A673 (cell line): ENCODE measurements at regions of chr4 and their contacts with region 1.

Region 1: DNA sequence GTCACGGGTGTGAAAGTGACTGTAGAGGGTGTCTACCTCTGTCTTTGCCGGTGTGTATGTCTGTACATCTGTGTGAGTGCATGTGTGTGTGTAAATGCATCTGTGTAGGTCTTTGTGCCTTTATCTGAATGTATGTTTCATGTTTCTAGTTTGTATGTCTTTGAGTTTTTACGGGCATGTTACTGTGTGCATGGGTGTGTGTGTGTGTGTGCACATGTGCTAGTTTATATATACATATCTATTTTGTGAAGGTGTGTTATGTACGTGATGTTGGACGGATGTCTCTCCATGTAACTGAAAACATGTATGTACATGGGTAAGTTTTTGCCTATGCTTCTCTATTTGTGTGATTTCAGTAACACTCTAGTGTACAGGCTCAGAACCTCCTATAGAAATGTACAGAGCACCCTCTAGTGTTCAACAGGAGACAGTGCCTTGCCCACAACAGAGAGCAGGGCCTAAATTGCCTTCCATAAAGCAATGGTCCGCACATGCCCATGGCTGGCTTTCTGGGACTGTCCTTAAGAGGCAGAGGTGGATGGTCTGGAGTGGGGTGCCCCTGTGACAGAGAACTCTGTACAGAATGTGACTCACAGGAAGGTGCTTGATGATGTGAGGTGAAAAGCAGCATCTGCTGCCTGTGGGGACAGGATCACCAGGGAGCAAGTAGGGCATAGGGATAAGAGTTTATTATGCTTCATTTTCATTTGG is 343.5 kb downstream of the RAPGEF2 start:
- DNase-seq: peak; percentile 89
- H3K4me3 ChIP-seq: no peak overlapping the region
- H3K27ac ChIP-seq: no peak overlapping the region
- H3K4me1 ChIP-seq: no peaks in the 10 kb centered on the region
- H3K27me3 ChIP-seq: no peaks in the 10 kb centered on the region
- CTCF ChIP-seq: peak; percentile 99

Region 2: GRCh38 chr4:158259955-158260575 is 1186.4 kb before region 1 on chr4:
- CTCF ChIA-PET with region 1: no interaction called
- POLR2A ChIA-PET with region 1: no interaction called
- intact Hi-C with region 1: loop called (anchors 5 kb)
- DNase-seq: peak; percentile 71
- H3K4me3 ChIP-seq: no peak overlapping the region
- H3K27ac ChIP-seq: no peak overlapping the region
- H3K4me1 ChIP-seq: no peaks in the 10 kb centered on the region
- H3K27me3 ChIP-seq: no peaks in the 10 kb centered on the region
- CTCF ChIP-seq: peak; percentile 63

Region 3: DNA sequence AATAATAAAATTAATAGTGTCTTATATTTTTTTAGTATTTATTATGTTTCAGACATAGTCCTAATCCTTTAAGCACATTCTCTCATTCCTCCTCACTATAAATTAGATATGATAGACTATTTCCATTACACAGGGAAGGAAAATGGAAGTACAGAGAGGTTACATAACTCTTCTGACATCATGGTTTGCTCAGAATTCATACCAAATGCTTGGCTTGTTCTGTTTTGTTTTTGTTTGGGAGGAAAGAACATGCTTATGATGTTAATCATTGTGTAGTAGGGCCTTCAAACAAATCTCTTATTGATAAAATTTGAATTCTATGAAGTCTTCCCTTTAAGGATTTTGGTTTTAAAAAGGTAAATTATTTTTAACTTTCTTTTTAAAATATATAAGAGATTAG is 865.3 kb before region 1 on chr4:
- CTCF ChIA-PET with region 1: no interaction called
- POLR2A ChIA-PET with region 1: no interaction called
- intact Hi-C with region 1: no loop called
- DNase-seq: no peak
- H3K4me3 ChIP-seq: no peak overlapping the region
- H3K27ac ChIP-seq: no peak overlapping the region
- H3K4me1 ChIP-seq: no peaks in the 10 kb centered on the region
- H3K27me3 ChIP-seq: no peaks in the 10 kb centered on the region
- CTCF ChIP-seq: no peak

Region 4: GRCh38 chr4:158729716-158730559 is 716.5 kb before region 1 on chr4:
- CTCF ChIA-PET with region 1: no interaction called
- POLR2A ChIA-PET with region 1: no interaction called
- intact Hi-C with region 1: loop called (anchors 1 kb)
- DNase-seq: peak; percentile 82
- H3K4me3 ChIP-seq: no peak overlapping the region
- H3K27ac ChIP-seq: no peak overlapping the region
- H3K4me1 ChIP-seq: no peaks in the 10 kb centered on the region
- H3K27me3 ChIP-seq: peaks cover 22% of the 10 kb centered on the region
- CTCF ChIP-seq: peak; percentile 90

Region 5: DNA sequence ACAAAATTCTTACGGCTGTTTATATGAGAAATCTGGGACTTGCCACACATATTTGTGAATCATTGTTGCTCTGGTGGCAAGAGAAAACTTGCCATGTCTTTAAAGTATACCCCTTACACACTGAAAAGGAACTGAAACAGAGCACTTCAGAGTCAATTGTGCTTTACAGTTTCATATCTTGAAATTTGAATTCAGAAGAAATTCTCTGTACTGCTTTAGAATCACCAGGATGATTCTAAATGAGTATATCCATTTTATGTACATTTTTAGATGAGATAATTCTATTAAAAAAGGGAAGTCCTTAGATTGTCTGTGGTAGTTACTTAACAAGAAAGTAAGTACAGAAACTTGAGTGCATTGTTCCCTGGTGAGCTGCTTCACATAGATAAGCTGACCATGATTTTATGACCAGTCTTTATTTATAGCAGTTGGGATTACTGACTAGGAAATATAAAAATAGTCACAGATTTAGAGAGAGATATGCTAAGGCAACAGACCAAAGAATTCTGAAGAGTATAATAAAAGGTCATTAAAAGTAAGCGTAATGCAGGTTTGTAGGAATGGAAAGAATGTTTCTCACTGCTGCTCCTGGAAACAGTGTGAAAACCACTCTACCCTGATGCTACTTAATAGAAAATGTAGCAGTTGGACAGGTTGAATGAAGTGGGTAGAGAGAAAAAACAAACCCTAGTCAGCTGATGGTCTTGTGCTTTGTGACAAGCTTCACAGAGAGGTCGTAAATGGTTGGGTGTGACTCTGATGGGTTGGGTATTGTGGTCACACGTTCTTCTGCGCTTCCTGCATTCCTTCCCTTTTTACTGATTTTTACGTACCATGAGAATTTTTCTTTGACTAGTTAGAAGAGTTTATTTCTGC is 636.6 kb before region 1 on chr4:
- CTCF ChIA-PET with region 1: no interaction called
- POLR2A ChIA-PET with region 1: no interaction called
- intact Hi-C with region 1: no loop called
- DNase-seq: peak; percentile 76
- H3K4me3 ChIP-seq: no peak overlapping the region
- H3K27ac ChIP-seq: no peak overlapping the region
- H3K4me1 ChIP-seq: peaks cover 28% of the 10 kb centered on the region
- H3K27me3 ChIP-seq: no peaks in the 10 kb centered on the region
- CTCF ChIP-seq: no peak

Region 6: DNA sequence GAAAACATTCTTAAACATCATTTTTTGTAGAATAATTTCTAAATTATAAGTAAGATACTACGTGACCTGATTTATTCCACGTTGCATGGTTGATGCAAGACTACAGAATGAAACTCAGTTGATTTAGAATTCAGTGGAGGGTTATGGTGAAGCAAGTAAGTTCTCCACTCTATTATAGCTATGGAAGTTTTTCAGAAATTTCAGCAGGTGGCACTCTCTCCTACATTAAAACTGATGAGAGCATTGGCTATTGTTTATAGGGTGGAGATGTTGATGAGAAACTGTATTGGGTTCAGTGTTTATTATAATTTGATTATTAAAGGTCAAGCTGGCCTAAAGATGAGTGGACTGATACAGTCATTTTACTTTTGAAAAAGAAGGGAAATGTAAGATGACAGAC is 589.6 kb before region 1 on chr4:
- CTCF ChIA-PET with region 1: no interaction called
- POLR2A ChIA-PET with region 1: no interaction called
- intact Hi-C with region 1: loop called (anchors 2 kb)
- DNase-seq: peak; percentile 78
- H3K4me3 ChIP-seq: no peak overlapping the region
- H3K27ac ChIP-seq: no peak overlapping the region
- H3K4me1 ChIP-seq: peaks cover 4% of the 10 kb centered on the region
- H3K27me3 ChIP-seq: no peaks in the 10 kb centered on the region
- CTCF ChIP-seq: peak; percentile 87

Region 7: DNA sequence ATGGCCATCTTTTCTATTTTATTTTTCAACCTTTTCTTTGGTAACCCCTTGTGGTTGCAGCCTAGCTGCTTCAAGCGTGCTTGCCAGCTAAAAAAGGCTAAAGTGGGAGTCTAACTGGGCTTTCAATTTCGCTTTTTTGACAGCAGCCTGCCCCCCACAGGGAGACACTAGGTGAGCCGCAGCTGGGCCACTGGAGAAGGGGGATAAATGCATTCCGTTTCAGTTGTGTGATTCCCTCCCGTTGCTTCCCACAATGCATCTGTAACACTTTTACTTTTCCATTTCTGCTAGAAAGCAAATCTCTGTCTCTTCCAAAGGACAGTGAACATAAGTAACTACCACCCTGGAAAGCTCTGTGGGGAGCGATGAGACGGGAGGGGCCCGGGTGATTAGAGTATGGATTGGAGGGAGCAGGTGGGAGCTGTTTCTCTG is 429.8 kb before region 1 on chr4:
- CTCF ChIA-PET with region 1: no interaction called
- POLR2A ChIA-PET with region 1: no interaction called
- intact Hi-C with region 1: loop called (anchors 10 kb)
- DNase-seq: peak; percentile 87
- H3K4me3 ChIP-seq: no peak overlapping the region
- H3K27ac ChIP-seq: no peak overlapping the region
- H3K4me1 ChIP-seq: peaks cover 21% of the 10 kb centered on the region
- H3K27me3 ChIP-seq: no peaks in the 10 kb centered on the region
- CTCF ChIP-seq: peak; percentile 59

Region 8: GRCh38 chr4:159206427-159206871 is 240.0 kb before region 1 on chr4:
- CTCF ChIA-PET with region 1: no interaction called
- POLR2A ChIA-PET with region 1: no interaction called
- intact Hi-C with region 1: loop called (anchors 2 kb)
- DNase-seq: no peak
- H3K4me3 ChIP-seq: no peak overlapping the region
- H3K27ac ChIP-seq: no peak overlapping the region
- H3K4me1 ChIP-seq: no peaks in the 10 kb centered on the region
- H3K27me3 ChIP-seq: no peaks in the 10 kb centered on the region
- CTCF ChIP-seq: no peak

Region 9: GRCh38 chr4:159298502-159298901 is 147.9 kb before region 1 on chr4:
- CTCF ChIA-PET with region 1: interaction called, 9 read pairs
- POLR2A ChIA-PET with region 1: no interaction called
- intact Hi-C with region 1: loop called (anchors 10 kb)
- DNase-seq: no peak
- H3K4me3 ChIP-seq: no peak overlapping the region
- H3K27ac ChIP-seq: no peak overlapping the region
- H3K4me1 ChIP-seq: peaks cover 23% of the 10 kb centered on the region
- H3K27me3 ChIP-seq: no peaks in the 10 kb centered on the region
- CTCF ChIP-seq: no peak